Naive thymus-derived CD4-positive, alpha-beta T cell (primary cell): ENCODE measurements at regions of chr17 and their contacts with region 1.

Region 1: DNA sequence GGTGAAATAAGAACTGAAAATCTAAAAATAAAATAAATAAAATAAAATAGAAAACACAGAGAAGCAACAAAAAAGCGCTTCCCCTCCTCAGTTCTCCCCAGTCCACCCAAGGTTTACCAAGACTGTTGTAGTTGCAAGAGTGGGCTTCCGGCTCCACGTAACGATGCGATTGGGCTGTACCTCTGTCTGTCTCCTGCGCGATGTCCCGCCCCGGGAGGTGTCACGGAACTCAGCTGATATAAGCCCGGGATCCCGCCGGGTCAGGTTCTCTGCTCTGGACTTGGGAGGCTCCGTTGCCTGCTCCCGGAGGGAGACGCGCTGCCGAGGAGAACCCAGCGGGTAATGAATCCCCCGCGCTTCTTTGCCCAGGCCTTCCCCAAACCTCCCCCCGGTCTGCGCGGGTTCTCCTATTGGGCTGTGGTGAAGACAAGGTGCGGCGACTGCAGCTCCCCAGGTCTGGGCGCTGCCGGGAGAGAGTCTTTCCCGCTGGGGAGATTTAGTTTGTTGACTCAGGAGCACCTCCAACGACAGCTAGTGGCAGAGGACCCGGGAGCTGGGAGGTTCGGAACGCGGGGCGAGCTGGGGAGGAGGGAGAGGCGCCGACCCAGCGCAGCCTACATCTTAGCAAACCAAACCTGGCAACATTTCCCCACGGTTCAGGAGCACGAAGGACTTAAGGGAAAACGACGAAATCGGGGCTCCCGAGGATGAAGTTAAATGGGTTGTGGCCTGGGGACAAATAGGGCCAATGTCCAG is at the start of gene SLFN5:
- DNase-seq: peak; percentile 82 to 97 (median 94)
- ATAC-seq: peak; percentile 88
- H3K4me3 ChIP-seq: peak within 1 kb of the TSS; percentile 97
- H3K4me3 Mint-ChIP-seq: peak within 1 kb of the TSS; percentile 91 to 100 (median 100)
- H3K27ac ChIP-seq: peak within 1 kb of the TSS; percentile 85
- H3K27ac Mint-ChIP-seq: peak within 1 kb of the TSS; percentile 94 to 100 (median 99)
- H3K4me1 ChIP-seq: peaks cover 35 to 51% of the 10 kb centered on the region in 2 donors
- H3K4me1 Mint-ChIP-seq: peaks cover 32 to 62% (median 41%) of the 10 kb centered on the region in 7 donors
- H3K27me3 ChIP-seq: no peaks in the 10 kb centered on the region
- H3K27me3 Mint-ChIP-seq: no peaks in the 10 kb centered on the region
- total RNA-seq, gene SLFN5: 80.0 to 199 (median 133) TPM

Region 2: DNA sequence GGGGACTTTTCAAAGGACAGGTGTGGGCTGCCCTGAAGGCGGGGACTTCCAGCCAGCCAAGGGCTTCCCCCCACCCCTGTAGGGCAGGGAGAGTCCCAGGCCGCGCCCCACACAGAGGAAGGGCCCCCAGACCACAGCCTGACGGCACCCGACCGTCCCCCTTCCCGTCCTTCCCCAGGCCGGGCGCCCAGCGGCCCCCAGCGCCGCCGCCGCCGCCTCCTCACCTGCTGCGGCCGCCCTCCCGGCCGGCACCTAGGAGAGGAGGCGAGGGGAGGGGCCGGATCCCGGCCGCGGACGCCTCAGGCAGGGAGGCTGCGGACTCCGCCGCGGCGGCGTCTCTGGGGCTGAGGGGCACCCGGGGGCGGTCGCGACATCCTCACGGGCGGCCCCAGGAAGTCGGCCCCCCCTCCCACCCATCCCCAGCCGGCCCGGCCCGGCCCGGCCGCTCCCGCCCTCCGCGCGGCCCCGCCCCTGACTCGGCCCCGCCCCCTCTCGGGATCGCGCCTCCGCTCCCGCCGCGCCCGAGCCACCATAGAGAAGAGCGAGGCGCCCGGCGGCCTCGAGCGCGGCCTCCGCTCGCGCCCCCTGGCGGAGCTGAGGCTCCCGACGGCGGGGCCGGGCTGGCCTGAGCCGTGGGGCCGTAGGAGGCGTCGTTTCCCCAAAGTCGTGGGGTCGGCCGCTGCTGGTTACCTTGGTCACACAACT is 153.9 kb before region 1 on chr17:
- CTCF ChIA-PET with region 1: no interaction called
- POLR2A ChIA-PET with region 1: no interaction called
- intact Hi-C with region 1: loop called in 1 of 2 experiments (anchors 1 kb)
- DNase-seq: peak; percentile 77 to 95 (median 89)
- ATAC-seq: peak; percentile 94
- H3K4me3 ChIP-seq: peak overlapping the region; percentile 93
- H3K4me3 Mint-ChIP-seq: peak overlapping the region; percentile 93 to 98 (median 94)
- H3K27ac ChIP-seq: peak overlapping the region; percentile 89
- H3K27ac Mint-ChIP-seq: peak overlapping the region; percentile 89 to 97 (median 94)
- H3K4me1 ChIP-seq: peaks cover 13 to 27% of the 10 kb centered on the region in 2 donors
- H3K4me1 Mint-ChIP-seq: peaks cover 21 to 52% (median 44%) of the 10 kb centered on the region in 7 donors
- H3K27me3 ChIP-seq: no peaks in the 10 kb centered on the region
- H3K27me3 Mint-ChIP-seq: no peaks in the 10 kb centered on the region

Region 3: DNA sequence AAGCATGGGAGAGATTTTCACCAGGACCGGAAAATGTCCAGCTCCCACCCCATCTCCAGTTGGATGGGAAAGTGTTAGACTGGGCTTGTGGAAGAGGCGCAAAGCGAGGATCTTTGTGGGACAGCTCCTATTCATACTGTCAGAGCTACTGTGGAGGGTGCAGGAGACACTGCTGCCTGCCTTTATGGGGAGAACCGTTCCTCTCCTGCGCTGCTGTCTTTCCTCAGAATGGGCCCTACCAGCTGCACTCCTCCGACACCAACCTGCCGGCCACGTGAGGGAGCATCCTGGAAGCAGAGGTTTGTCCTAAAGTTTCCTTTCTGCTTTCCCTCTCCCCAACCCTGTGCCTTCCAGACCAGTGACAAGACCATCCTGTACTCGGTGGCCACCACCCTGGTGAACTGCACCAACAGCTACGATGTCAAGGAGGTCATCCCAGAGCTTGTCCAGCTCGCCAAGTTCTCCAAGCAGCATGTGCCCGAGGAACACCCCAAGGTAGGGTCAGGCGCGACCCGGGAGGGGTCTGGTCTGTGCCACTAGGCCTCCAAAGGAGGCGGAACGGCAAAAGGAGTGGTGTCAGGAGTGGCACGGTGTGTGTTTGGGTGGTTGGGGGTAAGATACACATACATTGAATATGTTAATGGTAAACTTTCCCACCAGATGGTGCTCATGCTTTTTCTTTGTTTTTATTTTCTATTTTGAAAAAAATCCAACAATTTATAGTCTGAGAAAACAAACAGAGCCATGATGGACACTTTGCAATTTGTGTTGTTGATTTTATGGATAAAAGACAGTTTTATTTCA is 71.8 kb before region 1 on chr17:
- CTCF ChIA-PET with region 1: interaction called, 5 read pairs
- POLR2A ChIA-PET with region 1: interaction called, 31 read pairs
- intact Hi-C with region 1: loop called (anchors 1 kb)
- DNase-seq: peak in 7 of 9 donors; percentile 35 to 77 (median 70)
- ATAC-seq: peak; percentile 86
- H3K4me3 ChIP-seq: peak overlapping the region; percentile 25
- H3K4me3 Mint-ChIP-seq: peak overlapping the region in 8 of 10 donors; percentile 46 to 79 (median 70)
- H3K27ac ChIP-seq: peak overlapping the region; percentile 47
- H3K27ac Mint-ChIP-seq: peak overlapping the region; percentile 65 to 96 (median 89)
- H3K4me1 ChIP-seq: peaks cover 16 to 20% of the 10 kb centered on the region in 2 donors
- H3K4me1 Mint-ChIP-seq: peaks cover 24 to 59% (median 44%) of the 10 kb centered on the region in 7 donors
- H3K27me3 ChIP-seq: no peaks in the 10 kb centered on the region
- H3K27me3 Mint-ChIP-seq: no peaks in the 10 kb centered on the region

Region 4: GRCh38 chr17:35214631-35215273 is 28.2 kb before region 1 on chr17:
- CTCF ChIA-PET with region 1: interaction called, 52 read pairs
- POLR2A ChIA-PET with region 1: interaction called, 459 read pairs
- intact Hi-C with region 1: loop called (anchors 1 kb)
- DNase-seq: peak in 6 of 9 donors; percentile 44 to 64 (median 54)
- ATAC-seq: peak; percentile 36
- H3K4me3 ChIP-seq: peak overlapping the region; percentile 47
- H3K4me3 Mint-ChIP-seq: peak overlapping the region; percentile 69 to 91 (median 84)
- H3K27ac ChIP-seq: peak overlapping the region; percentile 76
- H3K27ac Mint-ChIP-seq: peak overlapping the region; percentile 90 to 99 (median 98)
- H3K4me1 ChIP-seq: peaks cover 75 to 85% of the 10 kb centered on the region in 2 donors
- H3K4me1 Mint-ChIP-seq: peaks cover 69 to 92% (median 87%) of the 10 kb centered on the region in 7 donors
- H3K27me3 ChIP-seq: no peaks in the 10 kb centered on the region
- H3K27me3 Mint-ChIP-seq: no peaks in the 10 kb centered on the region

Region 5: GRCh38 chr17:35286120-35286781 is 43.3 kb after region 1 on chr17:
- CTCF ChIA-PET with region 1: interaction called, 4 read pairs
- POLR2A ChIA-PET with region 1: interaction called, 10 read pairs
- intact Hi-C with region 1: loop called (anchors 1 to 2 kb)
- DNase-seq: peak in 7 of 9 donors; percentile 31 to 65 (median 56)
- ATAC-seq: peak; percentile 92
- H3K4me3 ChIP-seq: peak overlapping the region; percentile 11
- H3K4me3 Mint-ChIP-seq: peak overlapping the region in 9 of 10 donors; percentile 7 to 77 (median 60)
- H3K27ac ChIP-seq: peak overlapping the region; percentile 67
- H3K27ac Mint-ChIP-seq: peak overlapping the region; percentile 10 to 97 (median 88)
- H3K4me1 ChIP-seq: peaks cover 4 to 21% of the 10 kb centered on the region in 2 donors
- H3K4me1 Mint-ChIP-seq: peaks cover 28 to 61% (median 56%) of the 10 kb centered on the region in 7 donors
- H3K27me3 ChIP-seq: no peaks in the 10 kb centered on the region
- H3K27me3 Mint-ChIP-seq: peaks cover 0 to 19% (median 0%) of the 10 kb centered on the region in 5 donors

Region 6: DNA sequence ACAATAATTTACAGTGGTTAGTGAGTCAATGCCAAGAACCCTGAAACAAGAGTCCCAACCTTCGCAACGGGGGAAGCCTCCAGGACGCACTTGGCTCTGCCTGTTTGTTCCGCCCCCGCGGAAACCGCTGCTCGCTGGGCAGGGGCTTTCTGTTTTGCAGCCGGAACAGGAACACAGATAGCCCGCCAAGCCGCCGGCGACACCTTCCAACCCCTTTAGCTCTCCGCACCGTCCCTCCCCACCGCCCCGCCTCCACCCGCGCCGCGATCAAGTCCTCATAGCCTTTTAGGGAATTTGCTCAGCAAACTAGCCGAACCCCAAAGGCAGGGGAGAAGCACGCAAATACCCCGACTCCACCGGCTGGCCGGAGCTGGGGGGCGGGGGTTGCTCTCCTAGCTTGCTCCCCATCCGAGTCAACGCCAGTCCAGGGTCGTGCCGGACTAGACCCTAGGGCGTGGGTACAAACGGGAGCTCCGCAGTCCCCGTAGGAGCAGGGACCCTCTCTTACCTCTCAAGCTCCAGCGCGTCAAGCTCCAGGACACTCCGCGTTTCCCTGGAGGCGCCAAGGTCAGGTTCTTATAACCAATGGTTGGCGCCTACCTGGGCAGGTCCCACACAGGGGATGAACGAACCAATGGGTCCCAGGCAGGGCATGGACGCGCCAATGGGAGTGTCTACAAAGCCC is 205.4 kb after region 1 on chr17 and contains the start of gene SLFN13:
- CTCF ChIA-PET with region 1: no interaction called
- POLR2A ChIA-PET with region 1: interaction called, 4 read pairs
- intact Hi-C with region 1: loop called in 1 of 2 experiments (anchors 5 kb)
- DNase-seq: peak; percentile 59 to 89 (median 74)
- ATAC-seq: peak; percentile 94
- H3K4me3 ChIP-seq: peak within 1 kb of the TSS; percentile 57
- H3K4me3 Mint-ChIP-seq: peak within 1 kb of the TSS; percentile 75 to 94 (median 87)
- H3K27ac ChIP-seq: peak within 1 kb of the TSS; percentile 69
- H3K27ac Mint-ChIP-seq: peak within 1 kb of the TSS; percentile 76 to 94 (median 83)
- H3K4me1 ChIP-seq: peaks cover 7 to 14% of the 10 kb centered on the region in 2 donors
- H3K4me1 Mint-ChIP-seq: peaks cover 0 to 33% (median 26%) of the 10 kb centered on the region in 7 donors
- H3K27me3 ChIP-seq: no peaks in the 10 kb centered on the region
- H3K27me3 Mint-ChIP-seq: no peaks in the 10 kb centered on the region
- total RNA-seq, gene SLFN13: 10.5 to 64.7 (median 21.0) TPM

Region 7: GRCh38 chr17:35578197-35578928 is 335.4 kb after region 1 on chr17 and contains the start of gene PEX12:
- CTCF ChIA-PET with region 1: no interaction called
- POLR2A ChIA-PET with region 1: interaction called, 16 read pairs
- intact Hi-C with region 1: loop called in 1 of 2 experiments (anchors 2 kb)
- DNase-seq: peak; percentile 62 to 94 (median 89)
- ATAC-seq: peak; percentile 99
- H3K4me3 ChIP-seq: peak within 1 kb of the TSS; percentile 86
- H3K4me3 Mint-ChIP-seq: peak within 1 kb of the TSS; percentile 92 to 100 (median 97)
- H3K27ac ChIP-seq: peak within 1 kb of the TSS; percentile 92
- H3K27ac Mint-ChIP-seq: peak within 1 kb of the TSS; percentile 96 to 100 (median 99)
- H3K4me1 ChIP-seq: peaks cover 5 to 12% of the 10 kb centered on the region in 2 donors
- H3K4me1 Mint-ChIP-seq: peaks cover 6 to 40% (median 32%) of the 10 kb centered on the region in 7 donors
- H3K27me3 ChIP-seq: no peaks in the 10 kb centered on the region
- H3K27me3 Mint-ChIP-seq: peaks cover 0 to 2% (median 0%) of the 10 kb centered on the region in 5 donors
- total RNA-seq, gene PEX12: 2.9 to 8.0 (median 5.3) TPM